ENCODE measurements at regions of chr17 and their contacts with region 1.

Region 1: DNA sequence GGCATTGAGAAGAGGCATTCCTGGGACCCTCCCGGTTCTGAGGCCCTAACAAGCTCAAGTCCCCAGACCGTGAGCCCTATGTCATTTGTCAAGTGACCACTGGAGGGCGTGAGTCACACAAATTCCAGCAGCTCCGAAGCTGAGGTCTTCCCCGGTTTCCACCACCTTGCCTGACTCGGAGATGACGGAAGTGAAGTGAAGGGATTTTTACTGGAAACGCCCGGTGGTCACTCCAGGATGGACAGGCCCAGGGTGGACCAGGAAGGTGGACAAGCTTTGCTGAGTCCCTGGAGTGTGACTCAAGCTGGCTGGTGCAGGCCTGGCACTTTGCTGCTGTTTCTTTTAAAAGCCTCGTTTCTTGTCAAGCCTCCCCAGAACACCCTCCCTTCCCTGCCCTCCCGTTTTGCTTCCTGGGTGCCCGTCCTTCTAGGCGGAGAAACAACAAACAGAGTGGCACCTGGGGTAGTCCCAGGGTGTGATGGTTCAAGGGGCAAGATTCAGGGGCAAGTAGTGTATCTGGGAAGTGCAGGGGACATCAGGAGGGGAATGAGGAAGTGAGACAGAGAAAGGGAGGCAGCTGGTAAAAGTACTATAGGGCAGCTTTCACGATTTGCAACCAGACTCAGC is 5.3 kb upstream of the NOS2 start:
- DNase-seq: peak; percentile 79
- H3K4me3 ChIP-seq: no peak overlapping the region
- H3K27ac ChIP-seq: no peak overlapping the region
- H3K4me1 ChIP-seq: no peaks in the 10 kb centered on the region
- H3K27me3 ChIP-seq: no peaks in the 10 kb centered on the region
- CTCF ChIP-seq: peak; percentile 63 to 86 (median 81)
- POLR2A ChIP-seq: no peak

Region 2: GRCh38 chr17:28247671-28248555 is 442.3 kb after region 1 on chr17:
- intact Hi-C with region 1: loop called (anchors 5 kb)
- DNase-seq: no peak
- H3K4me3 ChIP-seq: no peak overlapping the region
- H3K27ac ChIP-seq: no peak overlapping the region
- H3K4me1 ChIP-seq: no peaks in the 10 kb centered on the region
- H3K27me3 ChIP-seq: no peaks in the 10 kb centered on the region
- CTCF ChIP-seq: no peak
- POLR2A ChIP-seq: no peak

Measured in prostate gland (tissue), 2 donors.